GM12878 (cell line): ENCODE measurements at regions of chr12 and their contacts with region 1.

Region 1: DNA sequence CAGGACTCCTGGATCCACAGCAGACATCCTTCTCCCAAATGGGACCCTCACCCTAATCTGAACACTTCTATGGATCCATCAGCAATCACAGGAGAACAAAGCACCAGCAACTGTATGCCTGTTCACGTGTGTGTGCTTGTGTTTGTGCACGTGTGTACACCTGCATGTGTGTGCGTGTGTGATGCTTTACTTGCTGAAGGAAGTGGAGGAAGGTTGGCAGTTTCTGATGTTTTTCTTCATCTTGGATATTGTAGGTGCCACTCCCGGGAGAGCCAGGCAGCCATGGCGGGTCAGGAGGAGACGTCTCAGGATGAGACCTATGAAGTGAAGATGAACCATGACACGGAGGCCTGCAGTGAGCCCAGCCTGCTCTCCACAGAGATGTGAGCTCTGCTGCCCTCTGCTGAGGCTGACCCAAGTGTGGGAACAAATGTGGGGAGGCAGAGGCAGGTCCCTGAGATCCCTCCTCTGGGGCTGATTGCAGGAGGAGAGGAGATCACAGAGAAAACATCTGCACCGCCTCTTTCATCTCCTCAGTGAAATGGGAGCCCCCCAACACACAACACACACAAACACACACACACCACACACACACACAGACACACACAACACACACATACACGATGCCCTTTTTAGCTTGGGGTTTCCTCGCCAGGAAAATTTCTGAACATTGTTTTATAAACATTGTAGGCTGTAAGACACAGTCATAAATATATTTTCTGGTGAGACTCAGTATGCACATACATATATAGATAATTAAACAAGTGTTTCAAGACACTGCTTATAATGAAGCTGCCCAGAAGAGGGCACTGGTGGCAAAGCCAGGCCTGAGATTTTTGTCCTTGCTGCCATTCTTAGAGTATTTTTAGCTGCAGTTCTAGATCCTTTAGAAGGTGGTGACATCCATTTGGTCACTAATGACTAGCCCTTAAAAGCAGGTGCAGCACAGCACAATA is 112.2 kb upstream of the FKBP4 start:
- DNase-seq: no peak
- ATAC-seq: peak; percentile 66
- H3K4me3 ChIP-seq: no peak overlapping the region
- H3K27ac ChIP-seq: no peak overlapping the region
- H3K4me1 ChIP-seq: no peaks in the 10 kb centered on the region
- H3K27me3 ChIP-seq: peaks cover 0 to 2% of the 10 kb centered on the region in 2 experiments; a peak in 1 of 4 replicates
- CTCF ChIP-seq: peak; percentile 43 to 48 (median 44); a peak in 5 of 6 replicates
- EP300 ChIP-seq: no peak
- POLR2A ChIP-seq: no peak
- RAD21 ChIP-seq: peak; percentile 64

Region 2: DNA sequence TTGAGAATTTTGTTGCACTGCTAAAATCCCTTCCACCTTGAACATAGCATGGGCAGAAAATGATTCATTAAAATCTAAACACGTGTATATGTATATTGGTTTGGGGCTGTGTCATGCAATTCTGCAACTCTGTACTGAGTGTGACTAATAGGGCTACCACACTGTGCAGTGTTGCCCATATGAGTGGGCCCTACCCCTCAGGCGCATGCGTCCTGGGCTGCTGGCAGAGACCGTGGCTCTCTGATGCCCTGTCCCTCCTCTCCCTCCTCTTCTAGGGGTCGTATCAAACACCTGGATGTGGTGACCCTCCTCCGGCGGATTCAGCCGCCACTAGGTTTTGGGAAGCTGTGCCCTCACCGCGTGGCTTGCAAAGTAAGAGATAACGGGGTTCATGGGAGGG is 16.2 kb before region 1 on chr12:
- CTCF ChIA-PET with region 1: no interaction called
- POLR2A ChIA-PET with region 1: no interaction called
- RAD21 ChIA-PET with region 1: no interaction called
- SMC1A ChIA-PET with region 1: no interaction called
- in situ Hi-C with region 1: no loop called
- intact Hi-C with region 1: no loop called
- DNase-seq: no peak
- ATAC-seq: no peak
- H3K4me3 ChIP-seq: no peak overlapping the region
- H3K27ac ChIP-seq: no peak overlapping the region
- H3K4me1 ChIP-seq: no peaks in the 10 kb centered on the region
- H3K27me3 ChIP-seq: peaks cover 0 to 2% of the 10 kb centered on the region in 2 experiments; a peak in 3 of 4 replicates
- CTCF ChIP-seq: no peak
- EP300 ChIP-seq: no peak
- POLR2A ChIP-seq: no peak
- RAD21 ChIP-seq: no peak

Region 3: GRCh38 chr12:2783936-2784600 is 101.5 kb after region 1 on chr12:
- CTCF ChIA-PET with region 1: interaction called, 6 read pairs
- POLR2A ChIA-PET with region 1: no interaction called
- RAD21 ChIA-PET with region 1: no interaction called
- SMC1A ChIA-PET with region 1: interaction called, 4 read pairs
- in situ Hi-C with region 1: no loop called
- intact Hi-C with region 1: loop called (anchors 2 kb)
- DNase-seq: no peak
- ATAC-seq: peak; percentile 96
- H3K4me3 ChIP-seq: no peak overlapping the region
- H3K27ac ChIP-seq: no peak overlapping the region
- H3K4me1 ChIP-seq: no peaks in the 10 kb centered on the region; the same call in 1 of the 2 replicates
- H3K27me3 ChIP-seq: peaks cover 1 to 6% of the 10 kb centered on the region in 2 experiments; a peak in 3 of 4 replicates
- CTCF ChIP-seq: peak; percentile 80 to 92 (median 92)
- EP300 ChIP-seq: no peak
- POLR2A ChIP-seq: no peak
- RAD21 ChIP-seq: peak; percentile 62